Ovary (tissue), 10 donors: ENCODE measurements at regions of chr20 and their contacts with region 1.

Region 1: DNA sequence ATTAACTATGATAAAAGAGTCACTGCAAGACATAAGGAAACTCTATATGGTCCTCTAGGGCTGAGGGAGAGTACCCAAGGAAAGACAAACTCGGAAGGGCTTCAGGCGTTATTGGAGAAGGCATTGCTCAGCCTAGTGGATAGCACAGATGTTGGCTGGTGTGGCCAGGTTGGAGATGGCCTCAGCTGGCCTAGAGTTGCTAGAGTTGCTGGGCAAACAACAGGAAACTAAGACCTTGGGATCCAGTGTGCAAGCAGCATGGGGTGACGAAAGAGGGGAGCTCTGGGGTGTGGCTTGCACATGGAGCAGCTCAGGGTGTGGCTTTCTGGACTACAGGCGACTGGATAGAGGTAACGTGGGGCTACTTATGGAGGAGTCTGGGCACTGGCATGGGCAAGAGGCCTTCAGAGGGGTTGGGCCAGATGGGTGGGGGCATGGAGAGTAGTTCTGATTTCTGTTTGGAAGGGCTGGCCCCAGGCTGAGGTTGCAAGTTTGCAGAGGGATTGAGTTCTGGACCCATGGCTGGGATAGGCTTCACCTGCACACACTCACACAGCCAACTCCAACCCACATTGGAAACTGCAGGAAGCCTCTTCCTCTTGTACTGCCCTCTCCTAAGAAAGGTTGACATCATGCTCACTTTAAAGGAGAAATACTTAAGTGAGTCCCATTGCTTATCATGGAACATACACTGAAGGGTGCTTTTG is 5.2 kb upstream of the BPIFB6 start:
- DNase-seq: no peak
- H3K4me3 ChIP-seq: no peak overlapping the region
- H3K27ac ChIP-seq: no peak overlapping the region
- H3K4me1 ChIP-seq: no peaks in the 10 kb centered on the region
- H3K27me3 ChIP-seq: no peaks in the 10 kb centered on the region
- CTCF ChIP-seq: no peak
- EP300 ChIP-seq: no peak
- POLR2A ChIP-seq: no peak

Region 2: DNA sequence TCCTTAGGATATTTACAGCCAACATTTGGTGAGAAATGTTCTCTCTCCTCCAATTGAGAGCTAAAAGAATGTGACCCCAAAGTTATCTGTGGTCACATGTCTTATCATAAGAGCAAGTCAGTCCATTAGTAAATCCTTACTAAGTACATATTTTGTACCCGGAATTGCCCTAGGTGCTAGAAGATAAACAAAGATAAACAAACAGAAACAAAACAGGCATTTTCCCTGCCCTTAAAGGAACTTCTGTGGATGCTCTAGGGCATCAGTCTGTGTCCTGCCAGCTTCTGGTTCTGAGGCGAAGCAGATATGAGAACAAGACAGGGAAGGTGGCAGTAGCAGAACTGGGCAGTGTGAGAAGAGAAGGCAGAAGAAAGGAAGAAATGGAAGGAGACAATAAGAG is 333.2 kb after region 1 on chr20:
- intact Hi-C with region 1: loop called in 1 of 4 experiments (anchors 5 kb)
- DNase-seq: no peak
- H3K4me3 ChIP-seq: no peak overlapping the region
- H3K27ac ChIP-seq: no peak overlapping the region
- H3K4me1 ChIP-seq: no peaks in the 10 kb centered on the region
- H3K27me3 ChIP-seq: no peaks in the 10 kb centered on the region
- CTCF ChIP-seq: no peak
- EP300 ChIP-seq: no peak
- POLR2A ChIP-seq: no peak